CD4-positive, alpha-beta memory T cell (primary cell): ENCODE measurements at regions of chr3 and their contacts with region 1.

Region 1: DNA sequence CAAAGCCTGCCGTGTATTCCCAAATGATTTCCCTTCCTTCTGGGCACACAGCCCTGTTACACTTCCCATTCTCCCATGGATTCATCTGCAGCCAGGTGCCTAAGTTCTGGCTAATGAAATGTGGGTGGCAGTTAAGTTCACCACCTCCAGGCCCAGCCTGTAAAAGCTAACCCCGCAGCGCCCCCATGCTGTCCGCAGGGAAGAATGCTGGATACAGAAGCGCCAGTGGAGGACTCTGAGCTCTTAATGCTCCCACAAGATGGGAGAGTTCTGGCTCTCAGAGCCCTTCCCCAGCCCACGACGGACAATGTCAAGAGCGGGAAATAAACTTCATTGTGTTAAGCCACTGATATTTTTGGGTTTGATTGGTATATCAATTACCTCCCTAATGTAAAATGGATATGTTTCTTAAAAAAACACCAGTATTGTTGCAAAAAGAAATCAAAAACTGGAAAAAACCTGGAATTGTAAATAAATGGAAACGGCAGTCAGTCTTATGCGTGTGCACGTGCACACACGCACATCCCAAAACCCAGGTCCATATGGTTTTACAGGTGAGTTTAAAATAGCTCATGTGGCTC is 37.7 kb upstream of the FGD5 start:
- DNase-seq: no peak
- H3K4me3 ChIP-seq: no peak overlapping the region
- H3K4me3 Mint-ChIP-seq: no peak overlapping the region
- H3K27ac ChIP-seq: no peak overlapping the region
- H3K27ac Mint-ChIP-seq: no peak overlapping the region
- H3K4me1 ChIP-seq: no peaks in the 10 kb centered on the region
- H3K4me1 Mint-ChIP-seq: no peaks in the 10 kb centered on the region
- H3K27me3 ChIP-seq: no peaks in the 10 kb centered on the region
- H3K27me3 Mint-ChIP-seq: peaks cover 4 to 14% of the 10 kb centered on the region in 2 donors

Region 2: GRCh38 chr3:14633819-14634424 is 147.1 kb before region 1 on chr3:
- CTCF ChIA-PET with region 1: no interaction called
- POLR2A ChIA-PET with region 1: no interaction called
- intact Hi-C with region 1: loop called (anchors 10 kb)
- DNase-seq: peak; percentile 44 to 60 (median 52)
- H3K4me3 ChIP-seq: no peak overlapping the region
- H3K4me3 Mint-ChIP-seq: no peak overlapping the region
- H3K27ac ChIP-seq: no peak overlapping the region
- H3K27ac Mint-ChIP-seq: no peak overlapping the region
- H3K4me1 ChIP-seq: no peaks in the 10 kb centered on the region
- H3K4me1 Mint-ChIP-seq: no peaks in the 10 kb centered on the region
- H3K27me3 ChIP-seq: no peaks in the 10 kb centered on the region
- H3K27me3 Mint-ChIP-seq: peaks cover 31 to 39% of the 10 kb centered on the region in 2 donors